Heart right ventricle (tissue), 16 donors: ENCODE measurements at regions of chr14 and their contacts with region 1.

Region 1: DNA sequence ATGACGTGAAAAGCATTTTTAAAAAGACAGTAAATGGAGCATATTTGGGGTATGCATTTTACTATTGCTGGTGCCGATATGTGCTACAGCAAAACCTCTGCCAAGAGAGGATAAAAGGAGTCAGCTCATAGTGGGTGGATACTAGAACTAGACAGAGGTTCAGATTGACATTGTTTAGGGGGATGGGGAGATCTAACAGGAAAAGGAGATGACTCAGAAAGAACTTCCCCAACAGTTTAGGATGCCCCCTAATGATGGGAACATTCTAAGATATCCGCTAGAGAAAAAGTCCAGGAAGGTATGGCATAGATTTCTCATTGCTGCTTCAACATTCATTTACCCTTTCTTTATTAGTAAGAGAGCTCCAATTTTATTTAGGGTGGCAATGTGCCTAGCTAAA is 110.5 kb upstream of the CLEC14A start:
- DNase-seq: no peak
- ATAC-seq: peak in 4 of 8 donors; percentile 40 to 70 (median 54)
- H3K4me3 ChIP-seq: no peak overlapping the region
- H3K27ac ChIP-seq: peak overlapping the region in 2 of 10 donors; percentile 7 to 74
- H3K4me1 ChIP-seq: peaks cover 0 to 40% (median 7%) of the 10 kb centered on the region in 9 donors
- H3K27me3 ChIP-seq: no peaks in the 10 kb centered on the region
- CTCF ChIP-seq: no peak

Region 2: GRCh38 chr14:38248321-38249050 is 117.9 kb before region 1 on chr14:
- intact Hi-C with region 1: loop called in 3 of 10 experiments (anchors 5 to 10 kb)
- DNase-seq: no peak
- ATAC-seq: peak in 1 of 8 donors; percentile 62
- H3K4me3 ChIP-seq: peak overlapping the region in 4 of 10 donors; percentile 2 to 89 (median 74)
- H3K27ac ChIP-seq: peak overlapping the region in 2 of 10 donors; percentile 6 to 99
- H3K4me1 ChIP-seq: peaks cover 0 to 26% (median 3%) of the 10 kb centered on the region in 9 donors
- H3K27me3 ChIP-seq: peaks cover 0 to 5% (median 0%) of the 10 kb centered on the region in 7 donors
- CTCF ChIP-seq: peak in 3 of 9 donors; percentile 12 to 50 (median 31)

Region 3: GRCh38 chr14:38316922-38317321 is 49.5 kb before region 1 on chr14:
- intact Hi-C with region 1: no loop called
- DNase-seq: no peak
- ATAC-seq: no peak
- H3K4me3 ChIP-seq: no peak overlapping the region
- H3K27ac ChIP-seq: no peak overlapping the region
- H3K4me1 ChIP-seq: peaks cover 0 to 6% (median 2%) of the 10 kb centered on the region in 9 donors
- H3K27me3 ChIP-seq: no peaks in the 10 kb centered on the region
- CTCF ChIP-seq: no peak

Region 4: DNA sequence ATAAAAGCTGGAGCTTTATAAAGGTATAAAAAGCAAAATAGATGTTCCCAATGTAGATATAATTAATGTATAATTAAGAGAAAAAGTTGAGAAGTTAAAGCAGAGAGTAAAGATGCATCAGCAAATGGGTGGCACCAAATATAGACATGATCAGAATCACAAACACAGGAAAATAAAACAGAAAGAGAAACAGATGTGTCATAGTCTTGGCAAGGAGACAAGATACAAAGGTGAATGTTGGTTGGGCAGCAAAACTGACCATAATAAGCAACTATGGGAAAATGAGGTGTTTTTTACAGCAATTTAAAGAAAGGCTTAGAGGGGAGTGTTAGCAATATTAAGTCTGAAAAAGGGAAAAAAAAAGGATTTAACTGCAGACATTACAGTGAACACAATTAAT is 25.0 kb after region 1 on chr14:
- intact Hi-C with region 1: no loop called
- DNase-seq: no peak
- ATAC-seq: peak in 2 of 8 donors; percentile 53 to 63
- H3K4me3 ChIP-seq: no peak overlapping the region
- H3K27ac ChIP-seq: peak overlapping the region in 1 of 10 donors; percentile 24
- H3K4me1 ChIP-seq: peaks cover 0 to 11% (median 0%) of the 10 kb centered on the region in 9 donors
- H3K27me3 ChIP-seq: no peaks in the 10 kb centered on the region
- CTCF ChIP-seq: no peak

Region 5: GRCh38 chr14:38989922-38990546 is 623.7 kb after region 1 on chr14:
- intact Hi-C with region 1: loop called in 1 of 10 experiments (anchors 10 kb)
- DNase-seq: no peak
- ATAC-seq: peak in 1 of 8 donors; percentile 41
- H3K4me3 ChIP-seq: peak overlapping the region in 2 of 10 donors; percentile 4 to 18
- H3K27ac ChIP-seq: peak overlapping the region in 7 of 10 donors; percentile 7 to 79 (median 51)
- H3K4me1 ChIP-seq: peaks cover 0 to 55% (median 15%) of the 10 kb centered on the region in 9 donors
- H3K27me3 ChIP-seq: no peaks in the 10 kb centered on the region
- CTCF ChIP-seq: no peak